ENCODE measurements at regions of chrX and their contacts with region 1.

Region 1: GRCh38 chrX:103533511-103534216 is 14.4 kb upstream of the RAB40A start:
- DNase-seq: peak; percentile 83
- H3K4me3 ChIP-seq: no peak overlapping the region
- H3K27ac ChIP-seq: no peak overlapping the region
- H3K4me1 ChIP-seq: no peaks in the 10 kb centered on the region
- H3K27me3 ChIP-seq: no peaks in the 10 kb centered on the region
- CTCF ChIP-seq: peak; percentile 85

Region 2: DNA sequence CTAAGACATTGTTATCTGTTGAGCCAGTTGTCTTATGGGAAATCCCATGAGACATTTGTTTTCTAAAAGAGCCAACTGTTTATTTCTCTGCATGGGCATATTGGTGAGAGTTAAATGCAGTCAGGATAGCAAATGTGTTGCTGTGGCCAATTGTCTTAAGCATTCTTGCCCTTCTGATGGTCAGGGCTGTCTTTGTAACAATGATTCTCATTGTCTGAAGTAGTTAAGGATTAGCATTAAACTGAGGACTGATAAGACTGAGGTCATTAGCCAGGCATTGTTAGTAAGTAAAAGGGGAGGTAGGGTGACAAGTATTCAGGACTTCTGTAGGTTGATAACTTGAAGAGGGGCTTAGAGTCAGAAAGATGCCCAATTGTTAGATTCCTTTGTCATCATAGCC is 164.0 kb after region 1 on chrX:
- intact Hi-C with region 1: loop called (anchors 10 kb)
- DNase-seq: no peak
- H3K4me3 ChIP-seq: no peak overlapping the region
- H3K27ac ChIP-seq: no peak overlapping the region
- H3K4me1 ChIP-seq: no peaks in the 10 kb centered on the region
- H3K27me3 ChIP-seq: no peaks in the 10 kb centered on the region
- CTCF ChIP-seq: no peak

Region 3: DNA sequence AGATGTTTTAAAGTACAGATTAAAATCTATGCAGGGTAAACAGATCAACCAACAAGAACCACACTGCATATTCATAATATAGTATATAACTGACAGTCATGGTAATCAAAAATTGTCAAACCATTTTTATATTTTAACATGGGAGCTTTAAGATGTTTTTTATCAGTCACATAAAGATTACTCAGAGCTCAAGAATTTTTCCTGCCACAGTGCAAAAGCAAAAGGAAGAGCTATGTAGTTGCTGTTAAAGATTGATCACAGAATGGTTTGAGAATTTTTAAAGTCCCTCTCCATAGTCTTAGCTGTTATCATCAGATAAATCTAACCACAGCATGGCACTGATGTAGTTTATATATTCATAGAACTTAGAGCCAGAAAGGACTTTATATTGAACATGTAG is 289.9 kb after region 1 on chrX:
- intact Hi-C with region 1: loop called (anchors 5 kb)
- DNase-seq: no peak
- H3K4me3 ChIP-seq: no peak overlapping the region
- H3K27ac ChIP-seq: no peak overlapping the region
- H3K4me1 ChIP-seq: no peaks in the 10 kb centered on the region
- H3K27me3 ChIP-seq: no peaks in the 10 kb centered on the region
- CTCF ChIP-seq: no peak

Measured in colonic mucosa (tissue), 4 donors.